ENCODE measurements at regions of chr19 and their contacts with region 1.

Region 1: GRCh38 chr19:49590071-49590970 is 661 bp upstream of the PRR12 start:
- DNase-seq: peak; percentile 97 to 99 (median 98)
- ATAC-seq: peak; percentile 89
- H3K4me3 ChIP-seq: peak overlapping the region; percentile 88
- H3K27ac ChIP-seq: peak overlapping the region; percentile 95
- H3K4me1 ChIP-seq: peaks cover 10 to 42% of the 10 kb centered on the region in 2 experiments; a peak in 4 of 5 replicates
- H3K27me3 ChIP-seq: no peaks in the 10 kb centered on the region
- CTCF ChIP-seq: 0 out of 6 replicates have a peak, but pooled peaks of 1 of the 3 experiments have one; percentile 18
- EP300 ChIP-seq: no peak; the same call in 1 of the 2 replicates
- POLR2A ChIP-seq: peak; percentile 97
- RAD21 ChIP-seq: 0 out of 4 replicates have a peak, but pooled peaks of 1 of the 2 experiments have one; percentile 6

Region 2: GRCh38 chr19:49157445-49158224 is 432.7 kb before region 1 on chr19 and contains the start of gene TRPM4:
- CTCF ChIA-PET with region 1: no interaction called
- POLR2A ChIA-PET with region 1: no interaction called
- in situ Hi-C with region 1: no loop called
- intact Hi-C with region 1: loop called (anchors 5 kb)
- DNase-seq: peak; percentile 88 to 96 (median 93)
- ATAC-seq: peak; percentile 88
- H3K4me3 ChIP-seq: peak within 1 kb of the TSS; percentile 83
- H3K27ac ChIP-seq: peak within 1 kb of the TSS; percentile 95
- H3K4me1 ChIP-seq: peaks cover 55 to 74% of the 10 kb centered on the region in 2 experiments
- H3K27me3 ChIP-seq: no peaks in the 10 kb centered on the region
- CTCF ChIP-seq: no peak
- EP300 ChIP-seq: no peak
- POLR2A ChIP-seq: peak; percentile 96
- RAD21 ChIP-seq: no peak
- polyA plus RNA-seq, gene TRPM4: 6.5 to 7.9 TPM

Region 3: GRCh38 chr19:49640113-49640898 is 50.0 kb after region 1 on chr19 and contains the start of gene RRAS:
- CTCF ChIA-PET with region 1: no interaction called
- POLR2A ChIA-PET with region 1: interaction called, 9 read pairs
- in situ Hi-C with region 1: no loop called
- intact Hi-C with region 1: loop called (anchors 2 kb)
- DNase-seq: peak; percentile 95 to 100 (median 96)
- ATAC-seq: peak; percentile 83
- H3K4me3 ChIP-seq: peak within 1 kb of the TSS; percentile 97
- H3K27ac ChIP-seq: peak within 1 kb of the TSS; percentile 97
- H3K4me1 ChIP-seq: peaks cover 27 to 58% of the 10 kb centered on the region in 2 experiments
- H3K27me3 ChIP-seq: no peaks in the 10 kb centered on the region
- CTCF ChIP-seq: 0 out of 6 replicates have a peak, but pooled peaks of 1 of the 3 experiments have one; percentile 2
- EP300 ChIP-seq: peak; percentile 45; the same call in 1 of the 2 replicates
- POLR2A ChIP-seq: peak; percentile 92
- RAD21 ChIP-seq: no peak
- polyA plus RNA-seq, gene RRAS: 0.70 to 1.3 TPM

Region 4: GRCh38 chr19:49665351-49666119 is 75.2 kb after region 1 on chr19 and contains the starts of genes BCL2L12 and IRF3:
- CTCF ChIA-PET with region 1: no interaction called
- POLR2A ChIA-PET with region 1: interaction called, 5 read pairs
- in situ Hi-C with region 1: no loop called
- intact Hi-C with region 1: loop called (anchors 2 kb)
- DNase-seq: peak; percentile 85 to 99 (median 91)
- ATAC-seq: peak; percentile 92
- H3K4me3 ChIP-seq: peak within 1 kb of the TSS; percentile 81
- H3K27ac ChIP-seq: peak within 1 kb of the TSS; percentile 91
- H3K4me1 ChIP-seq: peaks cover 7 to 33% of the 10 kb centered on the region in 2 experiments; a peak in 4 of 5 replicates
- H3K27me3 ChIP-seq: no peaks in the 10 kb centered on the region
- CTCF ChIP-seq: 0 out of 6 replicates have a peak, but pooled peaks of 1 of the 3 experiments have one; percentile 15
- EP300 ChIP-seq: no peak
- POLR2A ChIP-seq: peak; percentile 89
- RAD21 ChIP-seq: no peak
- polyA plus RNA-seq, gene BCL2L12: 7.4 to 7.5 TPM
- polyA plus RNA-seq, gene IRF3: 7.5 to 11.6 TPM

Region 5: DNA sequence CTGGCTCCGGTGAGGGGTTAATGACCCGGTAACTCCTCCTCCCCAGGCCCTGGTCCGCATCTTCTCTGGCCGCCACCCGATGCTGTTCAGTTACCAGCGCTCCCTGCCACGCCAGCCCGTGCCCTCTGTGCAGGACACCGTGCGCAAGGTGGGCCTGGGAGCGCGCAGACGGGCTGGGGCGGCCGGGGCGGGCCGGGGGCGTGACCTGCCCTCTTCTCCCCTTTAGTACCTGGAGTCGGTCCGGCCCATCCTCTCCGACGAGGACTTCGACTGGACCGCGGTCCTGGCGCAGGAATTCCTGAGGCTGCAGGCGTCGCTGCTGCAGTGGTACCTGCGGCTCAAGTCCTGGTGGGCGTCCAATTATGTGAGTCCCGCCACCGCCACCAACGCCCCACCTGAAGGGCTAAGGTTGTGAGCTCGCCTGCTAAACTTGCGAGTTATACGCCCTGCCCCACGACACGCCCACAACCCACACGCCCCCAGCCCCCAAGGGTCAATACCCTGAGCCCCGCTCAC is 111.0 kb after region 1 on chr19:
- CTCF ChIA-PET with region 1: no interaction called
- POLR2A ChIA-PET with region 1: no interaction called
- in situ Hi-C with region 1: no loop called
- intact Hi-C with region 1: no loop called
- DNase-seq: peak in 2 of 4 experiments; percentile 54 to 57
- ATAC-seq: peak; percentile 16
- H3K4me3 ChIP-seq: no peak overlapping the region
- H3K27ac ChIP-seq: no peak overlapping the region
- H3K4me1 ChIP-seq: peaks cover 10 to 23% of the 10 kb centered on the region in 2 experiments; a peak in 4 of 5 replicates
- H3K27me3 ChIP-seq: no peaks in the 10 kb centered on the region
- CTCF ChIP-seq: no peak
- EP300 ChIP-seq: no peak
- POLR2A ChIP-seq: no peak
- RAD21 ChIP-seq: no peak